RWPE1 (cell line): ENCODE measurements at regions of chr7 and their contacts with region 1.

Region 1: DNA sequence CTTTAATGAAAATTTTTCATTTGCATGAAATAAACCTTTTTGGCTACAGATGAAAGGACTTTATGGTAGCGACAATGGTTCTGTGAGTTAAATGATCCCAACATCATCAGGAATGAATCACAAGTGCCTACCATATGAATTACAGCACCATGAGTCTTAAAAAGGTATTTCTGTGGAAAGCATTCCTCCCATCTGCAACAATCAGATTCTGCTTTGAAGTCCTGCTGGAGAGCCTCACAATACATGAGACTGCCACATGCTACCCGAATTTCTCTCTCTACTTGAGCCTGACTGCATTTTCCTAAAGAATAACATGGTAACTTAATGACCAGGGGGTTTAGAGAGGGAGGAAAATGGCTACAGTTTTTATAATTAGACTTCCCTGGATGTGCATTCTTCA is 190.3 kb downstream of the TWIST1 start:
- DNase-seq: no peak
- H3K27ac ChIP-seq: no peak overlapping the region
- CTCF ChIP-seq: no peak

Region 2: DNA sequence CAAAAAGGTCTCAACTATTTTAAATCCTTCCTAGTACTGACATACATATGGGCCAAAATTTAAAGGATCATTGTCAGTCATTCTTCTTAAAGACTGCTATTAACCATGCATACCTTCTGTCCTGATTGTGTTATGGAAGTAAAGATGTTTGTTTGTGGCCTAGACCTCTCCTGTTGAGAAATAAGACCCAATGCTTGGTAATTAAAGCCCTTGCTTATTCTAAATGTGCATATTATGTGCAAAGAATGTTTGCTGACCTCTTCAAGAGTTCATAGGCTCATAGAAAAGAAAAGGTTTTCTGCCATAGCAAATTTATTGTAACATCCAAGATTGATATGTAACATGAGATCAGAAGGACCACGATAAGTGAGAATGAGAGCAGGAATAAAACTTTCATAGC is 44.7 kb after region 1 on chr7:
- CTCF ChIA-PET with region 1: interaction called, 11 read pairs
- POLR2A ChIA-PET with region 1: no interaction called
- DNase-seq: no peak
- H3K27ac ChIP-seq: peak overlapping the region; percentile 85
- CTCF ChIP-seq: no peak